Activated CD4-positive, alpha-beta T cell treated with anti-CD3 and anti-CD28 coated beads for 36 hours (primary cell): ENCODE measurements at regions of chr20 and their contacts with region 1.

Region 1: GRCh38 chr20:4813863-4814695 is 92.4 kb downstream of the PRND start:
- DNase-seq: peak; percentile 69
- ATAC-seq: peak; percentile 73
- H3K4me3 Mint-ChIP-seq: peak overlapping the region; percentile 96
- H3K27ac Mint-ChIP-seq: peak overlapping the region; percentile 100
- H3K4me1 Mint-ChIP-seq: peaks cover 73% of the 10 kb centered on the region
- H3K27me3 Mint-ChIP-seq: no peaks in the 10 kb centered on the region

Region 2: DNA sequence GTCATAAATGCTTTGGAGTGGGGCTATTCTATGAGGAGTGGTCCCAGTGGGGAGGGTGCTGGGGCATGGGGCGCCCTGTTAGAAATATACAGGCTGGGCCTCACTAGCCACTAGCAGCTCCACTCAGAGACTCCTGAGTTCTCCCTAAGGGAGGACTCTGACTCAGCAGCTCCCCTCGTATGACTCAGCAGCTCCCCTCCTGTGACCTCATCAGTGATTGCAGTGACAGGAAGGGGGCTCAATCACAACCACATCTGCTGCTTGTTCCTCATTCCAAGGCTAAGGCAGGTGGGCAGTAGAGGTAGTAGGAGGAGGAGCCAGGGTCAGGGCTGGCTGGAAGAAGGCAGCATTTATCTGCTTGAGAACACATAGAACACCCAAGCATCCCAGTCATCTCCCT is 18.7 kb before region 1 on chr20:
- CTCF ChIA-PET with region 1: interaction called, 4 read pairs
- POLR2A ChIA-PET with region 1: interaction called, 13 read pairs
- intact Hi-C with region 1: loop called in 1 of 2 experiments (anchors 2 kb)
- DNase-seq: peak; percentile 65
- ATAC-seq: peak; percentile 81
- H3K4me3 Mint-ChIP-seq: no peak overlapping the region
- H3K27ac Mint-ChIP-seq: peak overlapping the region; percentile 67
- H3K4me1 Mint-ChIP-seq: peaks cover 33% of the 10 kb centered on the region
- H3K27me3 Mint-ChIP-seq: no peaks in the 10 kb centered on the region

Region 3: GRCh38 chr20:5001174-5002076 is 187.3 kb after region 1 on chr20 and contains the start of gene SLC23A2:
- CTCF ChIA-PET with region 1: no interaction called
- POLR2A ChIA-PET with region 1: no interaction called
- intact Hi-C with region 1: loop called in 1 of 2 experiments (anchors 2 kb)
- DNase-seq: peak; percentile 75
- ATAC-seq: peak; percentile 73
- H3K4me3 Mint-ChIP-seq: peak within 1 kb of the TSS; percentile 82
- H3K27ac Mint-ChIP-seq: peak within 1 kb of the TSS; percentile 83
- H3K4me1 Mint-ChIP-seq: peaks cover 29% of the 10 kb centered on the region
- H3K27me3 Mint-ChIP-seq: no peaks in the 10 kb centered on the region
- total RNA-seq, gene SLC23A2: 16.7 to 17.6 TPM

Region 4: GRCh38 chr20:5078399-5078958 is 264.4 kb after region 1 on chr20:
- CTCF ChIA-PET with region 1: no interaction called
- POLR2A ChIA-PET with region 1: no interaction called
- intact Hi-C with region 1: loop called in 1 of 2 experiments (anchors 1 kb)
- DNase-seq: peak; percentile 90
- ATAC-seq: peak; percentile 95
- H3K4me3 Mint-ChIP-seq: peak overlapping the region; percentile 58
- H3K27ac Mint-ChIP-seq: peak overlapping the region; percentile 93
- H3K4me1 Mint-ChIP-seq: peaks cover 38% of the 10 kb centered on the region
- H3K27me3 Mint-ChIP-seq: no peaks in the 10 kb centered on the region